ENCODE measurements at regions of chr1 and their contacts with region 1.

Region 1: GRCh38 chr1:15128520-15129313 is 24.8 kb upstream of the TMEM51 start:
- DNase-seq: peak; percentile 83
- H3K4me3 Mint-ChIP-seq: no peak overlapping the region
- H3K27ac Mint-ChIP-seq: no peak overlapping the region
- H3K4me1 Mint-ChIP-seq: no peaks in the 10 kb centered on the region
- H3K27me3 Mint-ChIP-seq: peaks cover 4% of the 10 kb centered on the region

Region 2: DNA sequence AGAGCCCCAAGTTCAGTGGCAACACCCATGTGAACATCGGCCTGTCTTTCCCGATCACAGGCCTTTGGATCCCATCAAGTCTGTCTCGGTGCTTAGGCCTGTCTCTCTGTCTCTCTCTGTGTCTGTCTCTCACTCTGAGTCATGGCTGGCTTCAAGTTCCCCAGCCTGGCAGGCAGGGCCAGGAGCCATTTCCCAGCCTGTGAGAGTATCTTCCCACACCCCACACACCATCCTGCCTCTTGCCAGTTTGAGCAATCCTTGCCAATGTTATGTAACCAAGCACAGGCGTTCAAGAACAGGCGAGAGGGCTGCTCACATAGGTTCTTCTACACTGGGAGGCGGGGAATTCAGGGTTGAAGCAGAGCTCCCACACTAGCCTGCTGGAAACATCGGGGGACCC is 45.1 kb before region 1 on chr1:
- CTCF ChIA-PET with region 1: no interaction called
- POLR2A ChIA-PET with region 1: no interaction called
- intact Hi-C with region 1: no loop called
- DNase-seq: no peak
- H3K4me3 Mint-ChIP-seq: no peak overlapping the region
- H3K27ac Mint-ChIP-seq: no peak overlapping the region
- H3K4me1 Mint-ChIP-seq: no peaks in the 10 kb centered on the region
- H3K27me3 Mint-ChIP-seq: peaks cover 1% of the 10 kb centered on the region

Region 3: DNA sequence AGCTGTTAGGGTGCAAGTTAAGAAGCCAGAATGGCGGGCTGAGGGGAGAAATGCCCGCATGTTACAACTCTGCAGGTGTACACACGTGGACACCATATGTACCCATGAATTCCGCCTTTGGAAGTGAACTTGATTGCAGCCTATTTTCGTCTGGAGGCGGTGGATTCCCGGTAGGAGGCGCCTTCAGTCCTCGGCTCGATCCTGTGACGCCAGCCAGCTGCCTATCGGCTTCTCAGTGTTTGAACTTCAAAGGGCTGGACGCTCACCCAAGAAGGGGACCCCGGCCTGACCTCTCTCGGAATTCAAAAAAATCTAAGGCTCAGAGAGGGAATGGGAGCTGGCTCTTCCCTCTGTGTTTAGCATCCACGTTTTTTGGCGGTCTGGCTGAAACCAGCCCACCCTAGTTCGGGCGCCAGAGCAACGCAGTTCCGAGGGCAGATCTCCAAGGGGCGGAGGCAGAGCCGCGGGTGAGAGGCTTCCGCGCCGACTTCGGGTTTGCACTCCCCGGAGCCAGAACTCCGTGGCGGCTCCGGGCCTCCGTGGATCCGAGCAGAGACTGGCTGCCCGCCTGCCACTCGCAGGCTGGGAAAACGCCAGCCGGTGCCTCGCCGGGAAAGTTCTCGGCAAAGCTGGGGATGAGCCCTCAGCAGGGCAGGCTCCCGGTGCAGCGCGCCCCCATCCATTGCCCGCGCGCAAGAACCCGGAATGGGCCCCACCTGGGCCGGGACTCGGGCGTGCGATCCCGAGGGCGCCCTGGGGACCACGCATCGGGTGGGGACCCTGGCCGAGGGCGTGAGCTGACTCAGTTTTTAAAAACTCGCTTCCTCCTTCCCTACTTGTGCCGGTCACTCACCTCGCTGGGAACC is 23.8 kb after region 1 on chr1:
- CTCF ChIA-PET with region 1: interaction called, 13 read pairs
- POLR2A ChIA-PET with region 1: no interaction called
- intact Hi-C with region 1: no loop called
- DNase-seq: peak; percentile 43
- H3K4me3 Mint-ChIP-seq: peak overlapping the region; percentile 7
- H3K27ac Mint-ChIP-seq: no peak overlapping the region
- H3K4me1 Mint-ChIP-seq: peaks cover 25% of the 10 kb centered on the region
- H3K27me3 Mint-ChIP-seq: peaks cover 41% of the 10 kb centered on the region

Region 4: DNA sequence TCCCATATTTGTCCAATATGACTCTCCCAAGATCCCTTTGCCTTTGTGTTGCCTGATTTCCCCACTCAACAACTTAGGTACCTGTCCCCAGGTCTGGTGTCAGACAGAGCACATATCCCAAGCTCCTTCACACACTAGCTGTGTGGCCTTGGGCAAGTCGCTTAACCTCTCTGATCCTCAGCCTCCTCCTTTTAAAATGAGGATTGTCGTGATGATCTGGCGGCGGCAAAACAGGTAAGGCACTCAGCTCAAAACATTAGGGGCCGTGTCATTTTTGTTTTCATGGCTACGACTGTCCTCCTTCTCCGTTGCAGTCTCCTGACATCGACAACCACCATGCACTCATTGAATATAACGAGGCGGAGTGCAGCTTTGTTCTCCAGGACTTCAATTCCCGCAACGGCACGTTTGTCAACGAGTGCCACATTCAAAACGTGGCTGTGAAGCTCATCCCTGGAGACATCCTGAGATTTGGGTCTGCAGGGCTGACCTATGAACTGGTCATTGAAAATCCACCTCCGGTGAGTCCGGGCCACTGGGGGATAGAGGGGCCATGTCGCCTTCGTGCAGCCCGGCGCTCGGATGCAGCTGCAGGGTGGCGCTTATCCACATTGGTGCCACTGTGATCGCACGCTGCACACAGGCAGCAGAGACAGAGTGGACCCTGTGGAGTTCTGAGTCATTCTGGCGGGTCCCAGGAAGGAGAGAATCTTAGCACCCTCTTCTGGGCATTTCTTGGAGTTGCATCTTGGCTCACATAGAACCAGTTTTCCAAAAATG is 143.5 kb after region 1 on chr1:
- CTCF ChIA-PET with region 1: interaction called, 142 read pairs
- POLR2A ChIA-PET with region 1: no interaction called
- intact Hi-C with region 1: loop called (anchors 1 kb)
- DNase-seq: peak; percentile 61
- H3K4me3 Mint-ChIP-seq: no peak overlapping the region
- H3K27ac Mint-ChIP-seq: no peak overlapping the region
- H3K4me1 Mint-ChIP-seq: peaks cover 2% of the 10 kb centered on the region
- H3K27me3 Mint-ChIP-seq: peaks cover 21% of the 10 kb centered on the region

Region 5: GRCh38 chr1:15279576-15280230 is 151.0 kb after region 1 on chr1:
- CTCF ChIA-PET with region 1: interaction called, 142 read pairs
- POLR2A ChIA-PET with region 1: no interaction called
- intact Hi-C with region 1: no loop called
- DNase-seq: no peak
- H3K4me3 Mint-ChIP-seq: no peak overlapping the region
- H3K27ac Mint-ChIP-seq: no peak overlapping the region
- H3K4me1 Mint-ChIP-seq: no peaks in the 10 kb centered on the region
- H3K27me3 Mint-ChIP-seq: peaks cover 11% of the 10 kb centered on the region

Region 6: GRCh38 chr1:15299806-15300205 is 171.1 kb after region 1 on chr1:
- CTCF ChIA-PET with region 1: interaction called, 69 read pairs
- POLR2A ChIA-PET with region 1: no interaction called
- intact Hi-C with region 1: loop called (anchors 1 kb)
- DNase-seq: no peak
- H3K4me3 Mint-ChIP-seq: no peak overlapping the region
- H3K27ac Mint-ChIP-seq: no peak overlapping the region
- H3K4me1 Mint-ChIP-seq: peaks cover 9% of the 10 kb centered on the region
- H3K27me3 Mint-ChIP-seq: peaks cover 3% of the 10 kb centered on the region

Region 7: DNA sequence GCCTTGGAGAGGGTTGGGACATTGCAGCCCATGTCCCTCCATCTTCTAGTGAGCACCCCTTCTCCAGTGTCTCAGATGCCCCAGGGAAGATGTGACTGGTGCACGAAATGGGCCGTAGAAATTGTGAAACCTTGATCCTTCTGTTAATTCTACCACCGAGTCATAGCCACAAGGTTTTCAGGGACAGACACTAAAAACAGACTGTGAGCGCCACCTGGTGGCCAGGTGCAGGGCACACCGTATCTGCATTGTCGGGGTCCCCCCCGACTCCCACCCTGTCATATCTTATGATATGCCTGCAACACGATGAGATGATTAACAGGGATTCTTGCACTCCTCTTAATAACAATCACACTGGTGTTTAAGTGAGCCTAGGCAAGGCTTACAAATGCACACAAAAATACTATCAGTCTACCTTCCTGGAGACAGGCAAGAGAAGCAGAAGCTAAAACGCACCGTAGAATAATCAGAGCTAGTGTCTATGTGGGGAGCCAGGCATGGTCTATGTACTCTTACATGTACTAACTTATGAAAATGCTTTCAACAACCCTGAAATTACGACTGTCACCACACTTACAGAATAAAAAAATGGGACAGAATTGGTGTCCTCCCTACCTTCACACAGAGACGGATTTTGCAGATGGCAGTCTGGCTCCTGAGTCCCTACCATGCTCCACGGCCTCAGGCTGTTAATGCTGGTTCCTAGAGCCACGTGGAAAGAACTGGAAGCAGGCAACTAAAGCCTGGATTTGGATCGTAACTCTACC is 176.2 kb after region 1 on chr1:
- CTCF ChIA-PET with region 1: interaction called, 69 read pairs
- POLR2A ChIA-PET with region 1: no interaction called
- intact Hi-C with region 1: loop called (anchors 1 kb)
- DNase-seq: peak; percentile 77
- H3K4me3 Mint-ChIP-seq: no peak overlapping the region
- H3K27ac Mint-ChIP-seq: no peak overlapping the region
- H3K4me1 Mint-ChIP-seq: peaks cover 5% of the 10 kb centered on the region
- H3K27me3 Mint-ChIP-seq: peaks cover 7% of the 10 kb centered on the region

Region 8: DNA sequence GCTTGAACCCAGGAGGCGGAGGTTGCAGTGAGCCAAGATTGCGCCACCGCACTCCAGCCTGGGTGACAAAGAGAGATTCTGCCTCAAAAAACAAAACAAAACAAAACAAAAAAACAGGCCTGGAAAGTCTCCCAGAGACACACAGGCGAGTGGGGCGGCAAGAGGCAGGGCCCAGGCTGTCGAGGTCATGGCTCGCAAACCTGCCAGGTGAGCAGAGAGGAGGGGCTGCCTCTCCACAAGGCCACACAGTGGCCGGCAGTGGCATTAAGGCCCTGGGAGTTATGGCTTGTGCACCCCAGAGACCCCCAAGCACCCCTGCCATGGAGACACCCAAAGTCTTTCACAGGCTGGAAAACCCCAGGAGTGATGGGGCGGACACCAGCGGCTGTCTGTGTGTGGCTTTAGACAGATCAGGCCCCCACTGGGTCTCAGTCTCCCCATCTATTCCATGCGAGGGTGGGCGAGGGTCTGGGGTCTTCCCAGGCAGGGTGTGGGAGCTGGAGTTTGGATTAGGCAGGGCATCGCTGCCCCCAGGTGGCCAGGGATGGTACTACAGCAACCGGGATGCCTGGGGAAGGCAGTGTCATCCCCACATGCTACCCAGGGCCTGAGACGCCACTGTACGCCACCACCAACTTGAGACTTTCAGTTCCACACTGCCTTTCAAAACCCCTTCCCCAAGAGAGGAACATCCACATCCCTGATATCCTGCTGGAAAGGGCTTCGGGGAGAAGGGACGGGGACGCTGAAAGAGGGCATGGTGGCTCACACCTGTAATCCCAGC is 302.3 kb after region 1 on chr1:
- CTCF ChIA-PET with region 1: interaction called, 7 read pairs
- POLR2A ChIA-PET with region 1: no interaction called
- intact Hi-C with region 1: loop called (anchors 10 kb)
- DNase-seq: peak; percentile 81
- H3K4me3 Mint-ChIP-seq: no peak overlapping the region
- H3K27ac Mint-ChIP-seq: no peak overlapping the region
- H3K4me1 Mint-ChIP-seq: peaks cover 4% of the 10 kb centered on the region
- H3K27me3 Mint-ChIP-seq: no peaks in the 10 kb centered on the region